Posterior vena cava (tissue), 2 donors: ENCODE measurements at regions of chr16 and their contacts with region 1.

Region 1: GRCh38 chr16:19980632-19981265 is 92.9 kb downstream of the GPR139 start:
- DNase-seq: no peak

Region 2: DNA sequence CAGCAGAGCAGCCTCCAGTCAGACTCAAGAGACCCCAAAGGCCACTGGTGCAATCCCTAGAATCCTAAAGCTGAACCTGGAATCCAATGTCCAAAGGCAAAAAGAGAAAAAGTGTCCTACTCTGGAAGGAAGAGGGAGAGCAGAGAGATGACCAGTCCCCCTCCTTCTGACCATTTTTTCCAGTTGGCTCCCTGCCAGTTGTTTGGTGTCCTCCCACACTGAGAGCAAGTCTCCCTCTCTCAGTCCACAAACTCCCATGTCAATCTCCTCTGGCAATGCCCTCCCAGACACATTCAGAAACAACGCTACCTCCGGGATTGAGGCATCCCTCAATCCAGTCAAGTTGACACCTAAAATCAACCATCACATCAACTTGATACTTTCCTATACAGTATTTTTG is 699.5 kb before region 1 on chr16:
- intact Hi-C with region 1: no loop called
- DNase-seq: no peak

Region 3: GRCh38 chr16:20285993-20286499 is 305.3 kb after region 1 on chr16:
- intact Hi-C with region 1: loop called in 1 of 2 experiments (anchors 10 kb)
- DNase-seq: no peak